ENCODE measurements at regions of chr9 and their contacts with region 1.

Region 1: DNA sequence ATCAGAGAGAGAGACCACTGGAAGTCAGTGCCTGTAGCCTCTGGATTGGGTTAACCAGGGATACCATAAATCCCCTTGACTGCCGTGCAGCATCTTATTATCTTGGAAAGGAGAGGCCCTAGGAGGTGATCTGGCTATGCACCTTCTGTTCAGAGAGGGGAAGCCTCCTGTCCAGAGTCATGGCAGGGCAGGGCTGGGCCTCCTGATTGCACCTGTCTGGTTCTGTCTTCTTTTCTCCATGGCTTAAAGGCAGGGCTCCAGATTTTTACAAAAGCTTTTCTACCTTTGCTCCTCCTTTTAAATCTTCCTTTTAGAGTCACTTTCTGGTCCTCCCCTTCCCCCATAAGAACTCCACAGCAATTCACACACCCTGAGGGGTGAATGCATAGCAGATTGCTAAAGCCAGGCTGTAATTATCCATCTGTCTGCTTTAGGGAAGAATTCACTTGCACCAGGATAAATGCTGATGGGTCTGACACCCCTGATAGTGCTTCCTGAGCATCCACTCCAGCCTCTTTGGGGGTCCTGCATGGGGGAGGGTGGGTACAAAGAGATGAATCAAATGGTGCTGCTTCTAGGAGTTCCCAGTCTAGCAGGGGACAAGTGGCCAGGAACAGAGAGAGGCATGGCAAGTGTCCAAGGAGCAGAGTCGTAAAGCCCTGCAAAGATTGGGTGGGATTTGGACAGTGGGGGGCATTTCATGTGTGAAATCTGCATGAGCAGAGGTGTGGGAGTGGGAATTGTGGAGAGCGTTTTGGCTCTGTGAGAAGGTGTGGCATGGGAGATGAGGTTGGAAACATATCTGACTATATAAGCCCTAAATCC is 141.3 kb upstream of the ALDH1B1 start:
- DNase-seq: peak in 1 of 2 donors; percentile 59
- H3K4me3 ChIP-seq: no peak overlapping the region
- CTCF ChIP-seq: no peak
- POLR2A ChIP-seq: no peak

Region 2: DNA sequence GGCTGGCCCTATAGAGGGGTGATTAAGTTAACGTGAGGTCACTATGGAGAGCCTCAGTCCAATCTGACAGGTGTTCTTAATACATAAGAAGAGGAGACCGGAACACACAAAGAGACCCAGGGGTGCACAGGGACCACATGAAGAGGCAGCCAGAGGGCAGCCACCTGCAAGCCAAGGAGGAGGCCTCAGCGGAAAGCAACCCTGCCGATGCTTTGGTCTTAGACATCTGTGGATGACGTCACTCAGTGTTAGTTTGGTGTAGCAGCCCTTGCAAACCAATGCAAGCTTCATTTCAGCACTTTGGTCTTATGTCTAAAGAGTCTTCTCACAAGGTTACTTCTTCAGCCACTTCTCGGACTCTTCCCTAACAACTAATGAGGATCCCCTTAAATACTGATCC is 876.4 kb before region 1 on chr9:
- intact Hi-C with region 1: no loop called
- DNase-seq: no peak
- H3K4me3 ChIP-seq: no peak overlapping the region
- CTCF ChIP-seq: no peak
- POLR2A ChIP-seq: no peak

Region 3: DNA sequence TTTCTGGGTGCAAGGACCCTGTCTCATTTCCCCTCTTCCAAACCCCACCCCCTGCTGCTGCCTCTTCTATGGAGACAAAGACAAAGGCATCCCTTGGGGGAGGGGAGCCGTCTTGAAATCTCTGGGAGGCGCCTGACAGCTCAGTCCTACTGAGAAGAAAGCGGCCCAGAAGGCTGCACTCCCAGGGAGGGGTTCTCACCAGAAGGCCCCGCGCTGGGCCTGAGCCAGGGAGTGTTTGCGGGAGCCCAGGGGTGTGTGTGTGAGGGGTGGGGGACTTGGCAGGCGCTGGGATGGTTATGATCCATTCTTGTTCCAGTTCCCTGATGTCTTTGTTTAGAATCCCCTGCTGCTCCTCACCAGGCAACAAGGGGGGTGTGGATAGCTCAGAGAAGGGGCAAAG is 95.6 kb after region 1 on chr9:
- intact Hi-C with region 1: loop called (anchors 10 kb)
- DNase-seq: no peak
- H3K4me3 ChIP-seq: no peak overlapping the region
- CTCF ChIP-seq: no peak
- POLR2A ChIP-seq: no peak